Common myeloid progenitor, CD34-positive (primary cell): ENCODE measurements at regions of chr16 and their contacts with region 1.

Region 1: DNA sequence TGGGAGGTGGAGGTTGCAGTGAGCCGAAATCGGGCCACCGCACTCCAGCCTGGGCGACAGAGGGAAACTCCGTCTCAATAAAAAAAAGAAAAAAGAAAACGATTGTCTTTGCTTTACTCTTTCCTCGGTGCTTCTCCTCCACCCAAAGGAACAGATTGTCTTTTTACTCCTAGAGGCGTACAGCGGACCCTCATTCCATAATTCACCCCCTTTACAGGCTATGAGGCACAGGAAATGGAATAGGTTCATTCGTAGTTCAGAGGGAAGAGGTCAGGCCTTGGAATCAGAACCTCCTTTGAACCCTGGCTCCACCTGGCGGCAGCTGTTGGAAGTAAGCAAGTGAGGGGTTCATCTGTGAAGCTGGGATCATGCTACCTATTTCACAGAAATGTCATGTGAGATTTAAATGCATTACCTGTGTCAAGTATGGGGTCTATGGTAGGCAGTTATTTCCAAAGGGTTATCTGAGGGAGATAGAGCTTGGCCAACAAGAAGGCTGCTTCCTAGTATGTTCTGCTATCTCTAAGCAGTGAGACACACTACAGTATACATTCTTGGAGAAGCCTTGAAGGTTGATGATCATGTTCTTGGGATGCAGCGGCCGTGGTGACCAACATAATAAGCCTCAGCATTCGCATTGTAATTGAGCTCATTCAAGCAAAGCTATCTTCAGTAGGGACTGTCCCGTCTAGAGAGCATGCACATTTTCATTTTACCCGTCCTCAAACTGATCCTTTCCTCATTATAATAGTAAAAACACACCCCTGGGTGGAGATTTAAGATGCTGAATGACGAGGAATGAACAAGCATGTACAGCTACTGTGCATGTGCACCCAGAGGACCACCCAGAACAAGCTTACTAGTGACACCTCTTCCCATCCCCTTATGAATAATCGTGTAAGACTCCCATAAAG is 18.7 kb upstream of the ZNF689 start:
- DNase-seq: peak; percentile 75 to 88 (median 86)
- H3K4me3 ChIP-seq: peak overlapping the region in 2 of 7 experiments; percentile 37 to 66
- H3K27ac ChIP-seq: no peak overlapping the region
- H3K4me1 ChIP-seq: peaks cover 0 to 9% (median 5%) of the 10 kb centered on the region in 4 experiments
- H3K27me3 ChIP-seq: no peaks in the 10 kb centered on the region

Region 2: DNA sequence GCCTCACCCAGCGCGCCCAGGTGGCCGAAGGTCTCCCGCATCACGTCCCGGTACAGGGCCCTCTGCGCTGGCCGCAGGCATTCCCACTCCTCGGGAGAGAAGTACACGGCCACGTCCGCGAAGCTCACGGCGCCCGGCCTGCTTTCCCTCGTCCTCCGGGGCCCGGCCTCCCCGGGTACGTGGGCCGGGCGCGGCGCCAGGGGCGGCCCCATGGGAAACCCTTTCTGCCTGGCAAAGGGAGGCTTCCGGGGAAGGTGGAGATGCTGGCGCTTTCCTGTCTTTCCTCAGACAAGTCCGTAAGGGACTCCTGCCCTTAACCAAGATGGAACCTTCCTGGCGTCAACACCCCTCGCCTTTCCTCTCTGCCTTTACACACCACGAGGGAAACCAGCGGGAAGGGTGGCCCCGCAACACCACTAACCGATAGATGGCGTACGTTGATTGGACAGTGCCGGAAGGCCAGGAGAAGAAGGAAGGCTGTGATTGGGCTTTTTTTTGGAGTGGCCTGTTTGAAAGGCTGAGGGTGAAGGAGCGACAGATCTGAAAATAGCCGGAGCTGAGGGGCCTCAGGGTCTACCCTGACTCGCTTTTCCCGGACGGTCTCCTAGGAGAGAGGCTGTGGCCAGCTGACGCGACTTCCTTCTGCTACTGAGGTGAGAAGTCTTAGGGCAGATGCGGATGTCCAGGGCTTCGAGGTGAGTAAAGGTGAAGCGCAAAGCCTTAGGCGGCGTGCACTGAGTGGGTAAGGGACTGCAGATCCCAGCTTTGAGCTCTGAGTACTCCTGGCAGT is 43.3 kb before region 1 on chr16 and contains the start of gene ZNF785:
- CTCF ChIA-PET with region 1: interaction called, 10 read pairs
- POLR2A ChIA-PET with region 1: no interaction called
- DNase-seq: peak; percentile 96 to 98 (median 97)
- H3K4me3 ChIP-seq: peak within 1 kb of the TSS; percentile 60 to 86 (median 76)
- H3K27ac ChIP-seq: peak within 1 kb of the TSS; percentile 74 to 90
- H3K4me1 ChIP-seq: peaks cover 0 to 20% (median 18%) of the 10 kb centered on the region in 4 experiments
- H3K27me3 ChIP-seq: no peaks in the 10 kb centered on the region

Region 3: GRCh38 chr16:30602616-30603277 is 26.1 kb before region 1 on chr16:
- CTCF ChIA-PET with region 1: interaction called, 78 read pairs
- POLR2A ChIA-PET with region 1: no interaction called
- DNase-seq: no peak
- H3K4me3 ChIP-seq: no peak overlapping the region
- H3K27ac ChIP-seq: no peak overlapping the region
- H3K4me1 ChIP-seq: peaks cover 0 to 5% (median 3%) of the 10 kb centered on the region in 4 experiments
- H3K27me3 ChIP-seq: no peaks in the 10 kb centered on the region

Region 4: GRCh38 chr16:30609926-30610839 is 18.7 kb before region 1 on chr16 and contains the start of gene ZNF689:
- CTCF ChIA-PET with region 1: interaction called, 144 read pairs
- POLR2A ChIA-PET with region 1: no interaction called
- DNase-seq: peak; percentile 96 to 97 (median 97)
- H3K4me3 ChIP-seq: peak within 1 kb of the TSS; percentile 71 to 96 (median 87)
- H3K27ac ChIP-seq: peak within 1 kb of the TSS; percentile 97 to 98
- H3K4me1 ChIP-seq: peaks cover 1 to 20% (median 11%) of the 10 kb centered on the region in 4 experiments
- H3K27me3 ChIP-seq: no peaks in the 10 kb centered on the region

Region 5: DNA sequence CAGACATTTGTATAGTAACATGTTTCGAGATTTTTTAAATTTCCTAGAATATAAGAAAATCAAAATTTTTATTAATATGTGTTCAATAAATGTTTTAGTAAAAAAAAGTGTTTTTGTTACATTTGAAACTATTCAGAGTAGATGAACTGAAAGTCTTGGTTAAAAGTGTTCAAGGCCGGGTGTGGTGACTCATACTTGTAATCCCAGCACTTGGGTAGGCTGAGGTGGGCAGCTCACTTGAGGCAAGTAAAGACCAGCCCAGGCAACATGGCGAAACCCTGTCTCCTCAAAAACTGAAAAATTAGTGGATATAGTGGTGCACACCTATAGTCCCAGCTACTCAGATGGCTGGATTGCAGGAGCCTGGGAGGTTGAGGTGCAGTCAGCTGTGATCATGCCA is 102.5 kb after region 1 on chr16:
- CTCF ChIA-PET with region 1: no interaction called
- POLR2A ChIA-PET with region 1: no interaction called
- DNase-seq: no peak
- H3K4me3 ChIP-seq: no peak overlapping the region
- H3K27ac ChIP-seq: no peak overlapping the region
- H3K4me1 ChIP-seq: peaks cover 0 to 5% (median 0%) of the 10 kb centered on the region in 4 experiments
- H3K27me3 ChIP-seq: no peaks in the 10 kb centered on the region